Heart right ventricle (tissue), 16 donors: ENCODE measurements at regions of chr1 and their contacts with region 1.

Region 1: DNA sequence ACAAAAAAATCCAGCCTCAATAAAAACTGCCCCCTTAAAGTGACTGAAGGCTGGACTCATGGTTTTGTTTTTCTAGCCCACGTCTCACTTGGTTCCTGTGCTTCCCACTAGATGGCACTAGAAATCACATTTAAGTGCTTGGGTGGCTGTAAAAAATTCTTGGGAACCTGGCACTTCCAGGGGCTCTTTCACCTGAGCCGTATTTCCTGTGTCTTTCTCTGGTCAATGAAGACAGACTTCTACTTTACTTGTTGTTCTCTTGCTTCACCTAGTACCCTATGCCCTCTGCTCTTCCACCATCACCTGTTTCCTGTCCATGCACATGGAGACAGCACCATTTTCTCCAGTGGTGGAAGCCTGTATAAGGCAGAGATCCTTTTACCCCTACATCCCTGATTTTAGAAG is 20.0 kb downstream of the METTL13 start:
- DNase-seq: no peak
- ATAC-seq: peak in 3 of 8 donors; percentile 16 to 47 (median 30)
- H3K4me3 ChIP-seq: no peak overlapping the region
- H3K27ac ChIP-seq: no peak overlapping the region
- H3K4me1 ChIP-seq: peaks cover 0 to 49% (median 18%) of the 10 kb centered on the region in 9 donors
- H3K27me3 ChIP-seq: no peaks in the 10 kb centered on the region
- CTCF ChIP-seq: peak; percentile 57 to 89 (median 79)

Region 2: DNA sequence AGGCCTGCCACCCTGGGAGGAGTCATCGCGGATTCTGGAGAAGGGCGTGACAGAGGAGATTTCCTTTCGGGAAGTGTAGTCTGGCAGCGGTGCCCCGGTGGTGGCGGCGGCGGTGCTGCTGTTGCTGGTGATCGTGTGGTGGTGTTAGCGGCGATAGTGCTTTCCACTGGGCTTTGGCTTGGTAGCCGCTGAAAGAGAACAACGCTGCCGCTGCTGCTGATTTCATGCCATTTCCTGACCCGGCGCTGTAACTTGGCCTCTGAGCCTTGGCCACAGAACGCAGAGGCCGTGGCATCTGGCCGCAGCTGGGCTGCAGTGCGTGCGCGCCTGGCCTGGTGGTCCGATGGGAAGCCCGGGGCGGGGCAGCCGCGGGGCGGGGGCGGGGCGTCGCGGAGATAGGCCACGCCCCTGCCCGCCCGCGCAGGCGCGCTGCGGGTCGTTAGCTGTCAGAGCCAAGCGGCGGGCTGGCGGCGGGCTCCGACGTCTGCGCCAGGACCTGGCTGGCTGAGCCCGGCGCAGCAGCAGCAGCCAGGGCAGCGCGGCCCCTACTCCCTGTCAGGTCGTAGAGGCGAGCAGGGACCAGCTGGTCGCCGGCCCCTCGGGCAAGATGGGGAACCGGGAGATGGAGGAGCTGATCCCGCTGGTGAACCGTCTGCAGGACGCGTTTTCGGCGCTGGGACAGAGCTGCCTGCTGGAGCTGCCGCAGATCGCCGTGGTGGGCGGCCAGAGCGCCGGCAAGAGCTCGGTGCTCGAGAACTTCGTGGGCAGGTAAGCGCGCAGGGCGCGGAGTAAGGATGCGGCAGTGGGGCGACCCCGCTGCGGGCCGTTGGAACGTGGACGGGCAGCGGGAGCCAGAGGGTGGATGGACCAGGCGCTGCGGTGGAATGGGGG is 39.8 kb after region 1 on chr1 and contains the start of gene DNM3:
- intact Hi-C with region 1: loop called in 1 of 10 experiments (anchors 5 kb)
- DNase-seq: peak; percentile 75 to 85
- ATAC-seq: peak; percentile 96 to 99 (median 98)
- H3K4me3 ChIP-seq: peak within 1 kb of the TSS; percentile 67 to 95 (median 86)
- H3K27ac ChIP-seq: peak within 1 kb of the TSS in 9 of 10 donors; percentile 47 to 76 (median 72)
- H3K4me1 ChIP-seq: peaks cover 0 to 19% (median 15%) of the 10 kb centered on the region in 9 donors
- H3K27me3 ChIP-seq: peaks cover 0 to 29% (median 8%) of the 10 kb centered on the region in 7 donors
- CTCF ChIP-seq: no peak
- total RNA-seq, gene DNM3: 0.77 to 2.8 (median 2.2) TPM

Region 3: GRCh38 chr1:171901245-171901644 is 99.8 kb after region 1 on chr1:
- intact Hi-C with region 1: loop called in 1 of 10 experiments (anchors 10 kb)
- DNase-seq: no peak
- ATAC-seq: no peak
- H3K4me3 ChIP-seq: no peak overlapping the region
- H3K27ac ChIP-seq: no peak overlapping the region
- H3K4me1 ChIP-seq: peaks cover 0 to 6% (median 0%) of the 10 kb centered on the region in 9 donors
- H3K27me3 ChIP-seq: no peaks in the 10 kb centered on the region
- CTCF ChIP-seq: no peak

Region 4: DNA sequence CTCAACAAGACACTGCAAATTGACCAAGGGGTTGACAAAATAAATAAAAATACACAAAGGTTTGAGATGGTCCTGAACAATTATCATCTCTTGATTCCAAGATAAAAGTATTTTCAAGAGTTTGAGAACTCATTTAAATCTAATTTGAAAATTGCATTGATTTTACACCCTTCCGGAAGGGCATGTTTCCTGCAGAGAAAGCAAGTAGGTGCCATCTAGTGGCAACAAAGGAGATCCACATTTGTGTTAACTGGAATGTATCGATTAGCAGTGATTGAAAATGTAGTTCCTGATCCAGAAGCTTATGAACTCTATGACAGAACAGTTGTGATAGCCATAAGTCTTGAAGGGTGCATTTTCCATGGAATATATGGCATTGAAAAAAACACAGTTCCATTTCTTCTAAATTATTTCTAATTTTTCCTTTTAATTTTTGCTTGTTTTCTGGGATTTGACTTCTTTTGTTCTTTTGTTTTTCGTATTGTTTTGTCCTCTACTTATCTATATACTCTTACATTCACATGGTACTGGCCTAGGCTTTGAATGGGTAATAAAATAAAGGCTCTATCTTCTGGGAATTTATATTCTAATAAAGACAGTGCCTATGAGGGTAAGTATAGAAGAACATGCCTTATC is 183.5 kb after region 1 on chr1:
- intact Hi-C with region 1: loop called (anchors 1 to 5 kb)
- DNase-seq: no peak
- ATAC-seq: peak in 4 of 8 donors; percentile 46 to 75 (median 63)
- H3K4me3 ChIP-seq: no peak overlapping the region
- H3K27ac ChIP-seq: no peak overlapping the region
- H3K4me1 ChIP-seq: peaks cover 0 to 14% (median 0%) of the 10 kb centered on the region in 9 donors
- H3K27me3 ChIP-seq: no peaks in the 10 kb centered on the region
- CTCF ChIP-seq: peak; percentile 52 to 89 (median 78)